ENCODE measurements at regions of chr3 and their contacts with region 1.

Region 1: DNA sequence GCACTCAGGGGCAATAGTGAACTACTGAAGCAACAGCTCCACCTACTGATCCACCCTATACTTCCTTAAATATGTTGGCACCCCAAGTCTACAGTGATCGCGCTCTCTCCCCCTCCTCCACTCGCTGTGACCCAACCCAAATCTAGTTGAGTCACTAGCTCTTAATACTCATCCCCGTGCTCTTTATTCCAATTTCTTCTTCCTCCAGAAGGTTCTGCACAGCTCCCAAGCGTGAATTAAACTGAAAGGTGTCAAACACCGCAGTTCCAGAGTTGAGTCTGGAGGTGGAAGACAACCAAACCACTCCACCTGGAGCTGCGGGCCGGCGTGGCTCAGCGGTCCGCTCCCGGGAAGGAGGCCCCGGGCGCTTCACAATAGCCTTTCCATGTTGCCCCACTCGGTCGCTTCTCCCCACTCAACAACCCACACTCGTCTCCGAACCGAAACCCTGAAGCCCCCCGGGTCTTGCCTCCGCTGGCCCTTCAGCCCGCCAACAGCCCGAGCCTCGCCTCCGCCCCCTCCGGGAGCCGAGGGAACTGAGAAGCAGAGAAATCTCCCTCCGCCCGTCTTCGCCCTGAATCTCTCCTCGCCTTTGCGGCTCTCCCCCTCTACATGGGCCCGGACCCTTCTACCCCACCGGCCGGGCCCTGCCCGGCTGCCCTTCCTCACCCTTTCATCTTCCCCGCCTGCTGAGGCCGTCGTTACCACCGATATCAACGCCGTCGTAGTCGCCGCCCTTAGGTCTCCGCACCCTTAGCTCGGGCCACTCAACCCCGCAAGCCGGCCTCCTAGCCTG is 578 bp downstream of the NAA50 start:
- DNase-seq: peak; percentile 51 to 95 (median 78)
- ATAC-seq: peak; percentile 71
- H3K4me3 ChIP-seq: peak overlapping the region; percentile 83 to 86
- H3K4me3 Mint-ChIP-seq: peak overlapping the region; percentile 95
- H3K27ac ChIP-seq: peak overlapping the region; percentile 97 to 99
- H3K27ac Mint-ChIP-seq: peak overlapping the region; percentile 100
- H3K4me1 ChIP-seq: peaks cover 46% of the 10 kb centered on the region
- H3K4me1 Mint-ChIP-seq: peaks cover 72% of the 10 kb centered on the region
- H3K27me3 ChIP-seq: no peaks in the 10 kb centered on the region
- H3K27me3 Mint-ChIP-seq: no peaks in the 10 kb centered on the region
- CTCF ChIP-seq: peak; percentile 66

Region 2: DNA sequence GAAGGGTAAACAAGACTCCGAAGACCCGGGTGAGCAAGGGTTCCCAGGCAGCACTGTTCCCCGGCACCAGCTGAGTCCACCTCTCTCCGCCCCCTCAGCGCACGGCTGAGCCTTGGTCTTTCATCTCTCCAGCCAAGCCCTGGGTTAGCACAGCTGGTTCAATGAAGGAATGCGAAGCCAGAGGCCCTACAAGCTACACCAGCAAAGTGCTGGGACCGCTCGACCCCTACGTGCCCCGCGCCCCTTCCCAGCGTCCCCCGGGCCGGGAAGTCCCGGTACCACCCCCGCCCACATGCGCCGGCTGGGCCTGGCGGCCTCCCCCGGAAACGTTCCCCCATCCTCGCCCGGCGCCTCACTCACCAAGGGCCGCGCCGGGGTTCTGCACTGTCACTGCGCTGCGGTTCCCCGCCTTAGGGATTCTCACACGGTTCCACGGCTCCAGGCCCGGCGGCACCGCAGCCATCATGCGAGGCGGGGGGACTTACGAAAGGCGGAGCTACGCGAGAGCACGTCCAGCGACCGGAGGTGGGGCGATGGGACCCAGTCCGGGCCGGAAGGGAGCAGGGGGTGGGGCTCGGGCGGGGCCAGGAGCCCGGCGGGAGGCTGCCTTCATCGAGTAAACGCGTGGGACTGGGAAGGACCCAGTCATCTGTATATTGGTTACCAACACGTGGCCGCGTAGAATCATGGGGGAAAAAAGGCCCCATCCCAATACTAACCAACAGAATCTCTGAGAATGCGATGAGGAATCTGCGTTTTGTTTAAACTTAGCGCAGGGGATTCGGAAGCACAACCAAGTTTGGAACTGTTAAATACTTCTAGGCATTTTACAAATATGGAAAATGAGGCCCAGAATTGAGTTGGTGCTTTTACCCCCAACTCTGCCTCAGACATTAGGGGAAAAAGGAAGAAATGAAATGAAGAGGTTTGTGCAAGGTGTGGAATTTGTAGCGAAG is 726.0 kb before region 1 on chr3:
- CTCF ChIA-PET with region 1: no interaction called
- POLR2A ChIA-PET with region 1: no interaction called
- intact Hi-C with region 1: loop called in 1 of 2 experiments (anchors 10 kb)
- DNase-seq: peak; percentile 54 to 95 (median 82)
- ATAC-seq: peak; percentile 87
- H3K4me3 ChIP-seq: peak overlapping the region; percentile 57 to 87
- H3K4me3 Mint-ChIP-seq: peak overlapping the region; percentile 95
- H3K27ac ChIP-seq: peak overlapping the region; percentile 67 to 95
- H3K27ac Mint-ChIP-seq: peak overlapping the region; percentile 94
- H3K4me1 ChIP-seq: peaks cover 29% of the 10 kb centered on the region
- H3K4me1 Mint-ChIP-seq: peaks cover 64% of the 10 kb centered on the region
- H3K27me3 ChIP-seq: no peaks in the 10 kb centered on the region
- H3K27me3 Mint-ChIP-seq: no peaks in the 10 kb centered on the region
- CTCF ChIP-seq: no peak

Region 3: DNA sequence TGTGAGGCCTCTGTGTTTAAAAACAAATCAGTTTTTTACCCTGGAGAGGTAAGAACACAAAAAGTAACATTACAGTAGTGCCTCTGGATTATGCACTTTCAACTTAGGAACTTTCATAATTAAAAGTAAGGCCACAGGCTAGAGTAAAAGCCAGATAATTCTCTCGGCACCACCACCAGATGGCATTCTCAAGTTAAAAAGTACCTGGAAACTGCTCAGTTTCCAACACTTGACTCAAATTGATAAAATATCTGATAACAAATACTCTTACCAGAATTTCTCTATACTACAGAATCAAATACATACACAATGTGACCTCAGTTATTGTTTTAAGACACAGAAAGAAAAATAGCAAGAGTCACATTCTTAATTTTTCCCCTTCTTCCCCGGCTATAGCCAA is 250.4 kb before region 1 on chr3:
- CTCF ChIA-PET with region 1: interaction called, 14 read pairs
- POLR2A ChIA-PET with region 1: no interaction called
- intact Hi-C with region 1: loop called (anchors 1 to 2 kb)
- DNase-seq: peak in 6 of 9 experiments; percentile 38 to 67 (median 54)
- ATAC-seq: no peak
- H3K4me3 ChIP-seq: no peak overlapping the region
- H3K4me3 Mint-ChIP-seq: no peak overlapping the region
- H3K27ac ChIP-seq: no peak overlapping the region
- H3K27ac Mint-ChIP-seq: no peak overlapping the region
- H3K4me1 ChIP-seq: no peaks in the 10 kb centered on the region
- H3K4me1 Mint-ChIP-seq: no peaks in the 10 kb centered on the region
- H3K27me3 ChIP-seq: no peaks in the 10 kb centered on the region
- H3K27me3 Mint-ChIP-seq: no peaks in the 10 kb centered on the region
- CTCF ChIP-seq: peak; percentile 54

Region 4: GRCh38 chr3:113575206-113575605 is 170.3 kb before region 1 on chr3:
- CTCF ChIA-PET with region 1: interaction called, 7 read pairs
- POLR2A ChIA-PET with region 1: interaction called, 4 read pairs
- intact Hi-C with region 1: loop called in 1 of 2 experiments (anchors 2 kb)
- DNase-seq: no peak
- ATAC-seq: no peak
- H3K4me3 ChIP-seq: no peak overlapping the region
- H3K4me3 Mint-ChIP-seq: no peak overlapping the region
- H3K27ac ChIP-seq: no peak overlapping the region
- H3K27ac Mint-ChIP-seq: peak overlapping the region; percentile 61
- H3K4me1 ChIP-seq: no peaks in the 10 kb centered on the region
- H3K4me1 Mint-ChIP-seq: peaks cover 2% of the 10 kb centered on the region
- H3K27me3 ChIP-seq: no peaks in the 10 kb centered on the region
- H3K27me3 Mint-ChIP-seq: no peaks in the 10 kb centered on the region
- CTCF ChIP-seq: no peak

Region 5: DNA sequence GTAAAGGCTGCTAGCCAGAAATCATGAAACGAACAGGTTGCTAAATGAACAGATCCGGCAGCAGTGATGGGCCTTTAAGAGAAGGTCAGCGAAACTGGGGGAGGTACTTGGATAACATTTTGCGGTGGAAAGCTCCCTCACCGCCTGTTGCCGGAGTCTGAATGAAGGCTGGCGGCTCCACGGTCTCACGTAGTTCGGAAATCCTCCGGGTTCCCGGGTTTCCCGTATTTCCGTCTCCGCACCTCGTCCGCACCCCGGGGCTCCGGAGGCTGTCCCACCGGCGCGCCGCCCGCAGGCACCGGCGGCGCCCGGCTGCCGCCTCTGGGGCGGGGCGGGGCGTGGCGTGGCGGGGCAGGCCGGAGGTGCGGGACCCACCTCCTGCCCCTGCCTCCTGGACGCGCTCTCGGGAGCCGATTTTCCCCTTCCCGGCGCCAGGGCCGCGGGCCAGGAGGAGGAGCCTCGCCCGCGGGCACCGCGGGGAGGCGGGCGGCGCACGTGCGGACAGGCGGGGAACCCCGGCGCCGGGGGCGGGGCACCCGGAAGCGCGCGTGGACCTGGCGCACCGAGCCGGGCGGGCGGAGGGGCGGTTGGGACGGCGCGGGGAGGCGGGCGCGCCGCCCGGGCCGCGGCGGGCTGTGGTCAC is 202.0 kb after region 1 on chr3 and contains the start of gene ZDHHC23:
- CTCF ChIA-PET with region 1: no interaction called
- POLR2A ChIA-PET with region 1: no interaction called
- intact Hi-C with region 1: loop called in 1 of 2 experiments (anchors 5 kb)
- DNase-seq: peak; percentile 21 to 88 (median 63)
- ATAC-seq: peak; percentile 87
- H3K4me3 ChIP-seq: peak within 1 kb of the TSS; percentile 74 to 85
- H3K4me3 Mint-ChIP-seq: peak within 1 kb of the TSS; percentile 86
- H3K27ac ChIP-seq: no peak within 1 kb of the TSS
- H3K27ac Mint-ChIP-seq: peak within 1 kb of the TSS; percentile 84
- H3K4me1 ChIP-seq: peaks cover 8% of the 10 kb centered on the region
- H3K4me1 Mint-ChIP-seq: peaks cover 10% of the 10 kb centered on the region
- H3K27me3 ChIP-seq: no peaks in the 10 kb centered on the region
- H3K27me3 Mint-ChIP-seq: peaks cover 21% of the 10 kb centered on the region
- CTCF ChIP-seq: no peak
- total RNA-seq, gene ZDHHC23: 2.1 to 4.7 TPM

Region 6: DNA sequence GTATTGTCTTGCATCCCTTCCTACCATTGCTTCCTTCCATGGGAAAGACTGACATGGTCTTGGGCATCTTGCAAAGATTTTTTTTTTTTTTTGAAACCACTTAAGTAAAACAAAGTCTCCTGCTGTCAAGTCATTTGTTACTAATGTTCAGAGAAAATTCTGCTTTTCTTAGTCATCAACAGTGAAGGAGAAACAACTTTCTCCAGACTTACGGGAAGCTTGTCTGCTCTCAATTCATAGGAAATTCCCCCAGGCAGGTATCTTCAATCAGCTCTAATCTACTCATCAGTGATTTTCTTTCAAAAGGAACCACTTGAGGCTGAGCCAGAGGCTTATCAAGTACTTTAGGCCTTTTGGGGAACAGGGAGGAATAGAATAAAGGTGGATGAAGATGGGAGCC is 449.3 kb after region 1 on chr3:
- CTCF ChIA-PET with region 1: no interaction called
- POLR2A ChIA-PET with region 1: no interaction called
- intact Hi-C with region 1: no loop called
- DNase-seq: no peak
- ATAC-seq: no peak
- H3K4me3 ChIP-seq: no peak overlapping the region
- H3K4me3 Mint-ChIP-seq: no peak overlapping the region
- H3K27ac ChIP-seq: no peak overlapping the region
- H3K27ac Mint-ChIP-seq: no peak overlapping the region
- H3K4me1 ChIP-seq: no peaks in the 10 kb centered on the region
- H3K4me1 Mint-ChIP-seq: no peaks in the 10 kb centered on the region
- H3K27me3 ChIP-seq: no peaks in the 10 kb centered on the region
- H3K27me3 Mint-ChIP-seq: no peaks in the 10 kb centered on the region
- CTCF ChIP-seq: no peak

Region 7: DNA sequence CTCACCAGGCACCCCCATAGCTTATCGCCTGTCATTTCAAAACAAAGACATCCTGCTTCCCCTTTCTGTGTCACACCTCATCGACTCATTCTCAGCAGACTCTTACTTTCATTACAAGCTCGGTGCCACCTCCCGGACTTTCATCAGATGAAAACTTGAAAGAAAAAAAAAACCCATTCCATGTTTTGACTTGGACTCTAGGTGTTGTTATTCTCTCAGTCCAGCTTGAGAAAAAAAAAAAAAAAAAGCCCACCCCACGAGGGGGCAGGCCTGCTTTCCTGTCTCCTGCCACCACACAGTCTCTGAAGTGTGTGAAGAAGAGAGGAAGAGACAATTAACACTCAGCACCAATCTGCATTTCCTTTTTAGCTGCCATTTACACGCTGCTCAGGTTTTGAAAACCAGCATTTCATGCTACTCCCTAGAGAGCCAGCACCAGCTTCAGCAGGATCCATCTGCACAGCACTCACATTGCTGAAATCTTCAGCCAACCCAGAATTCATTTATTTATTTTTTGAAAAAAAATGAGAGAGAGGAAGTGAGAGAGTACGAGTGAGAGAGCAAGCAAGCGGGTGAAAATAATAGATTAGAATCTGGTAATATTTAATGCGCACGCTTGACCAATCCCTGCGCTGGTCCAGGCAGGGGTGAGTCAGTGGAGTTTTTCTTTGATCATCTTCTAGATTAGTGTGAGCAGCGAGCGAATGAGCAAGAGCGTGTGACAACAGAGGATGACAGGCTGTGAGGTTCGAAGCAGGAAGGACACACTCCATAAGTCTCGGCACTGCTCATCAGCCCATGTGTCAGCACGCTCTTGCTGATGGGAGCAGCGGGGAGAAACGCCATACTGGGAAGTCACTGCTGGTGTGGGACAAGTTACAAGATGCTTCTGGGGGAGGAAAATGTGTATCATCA is 468.4 kb after region 1 on chr3:
- CTCF ChIA-PET with region 1: no interaction called
- POLR2A ChIA-PET with region 1: interaction called, 5 read pairs
- intact Hi-C with region 1: loop called (anchors 2 to 5 kb)
- DNase-seq: peak; percentile 35 to 92 (median 74)
- ATAC-seq: peak; percentile 45
- H3K4me3 ChIP-seq: peak overlapping the region; percentile 55
- H3K4me3 Mint-ChIP-seq: no peak overlapping the region
- H3K27ac ChIP-seq: peak overlapping the region; percentile 91 to 96
- H3K27ac Mint-ChIP-seq: no peak overlapping the region
- H3K4me1 ChIP-seq: peaks cover 60% of the 10 kb centered on the region
- H3K4me1 Mint-ChIP-seq: peaks cover 3% of the 10 kb centered on the region
- H3K27me3 ChIP-seq: no peaks in the 10 kb centered on the region
- H3K27me3 Mint-ChIP-seq: no peaks in the 10 kb centered on the region
- CTCF ChIP-seq: peak; percentile 38

Region 8: DNA sequence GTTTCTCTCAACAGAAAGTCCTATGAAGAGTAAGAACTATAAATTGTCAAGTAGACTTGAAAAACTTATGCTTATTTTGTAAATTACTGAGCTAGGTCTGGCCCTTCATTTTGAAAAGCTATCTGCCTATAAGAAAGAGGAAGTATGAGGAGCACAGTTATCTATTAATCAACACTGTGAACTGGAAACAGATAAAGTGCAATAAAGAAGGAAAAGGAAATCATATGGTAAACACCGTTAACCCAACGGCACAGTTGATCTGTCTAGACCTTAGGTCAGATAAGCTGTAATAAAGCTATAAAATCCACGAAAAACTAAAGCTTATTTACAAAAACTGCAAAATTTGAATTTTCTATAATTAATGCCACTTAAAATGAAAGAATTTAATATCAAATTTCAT is 1159.2 kb after region 1 on chr3:
- CTCF ChIA-PET with region 1: no interaction called
- POLR2A ChIA-PET with region 1: no interaction called
- intact Hi-C with region 1: no loop called
- DNase-seq: no peak
- ATAC-seq: no peak
- H3K4me3 ChIP-seq: no peak overlapping the region
- H3K4me3 Mint-ChIP-seq: no peak overlapping the region
- H3K27ac ChIP-seq: no peak overlapping the region
- H3K27ac Mint-ChIP-seq: no peak overlapping the region
- H3K4me1 ChIP-seq: no peaks in the 10 kb centered on the region
- H3K4me1 Mint-ChIP-seq: peaks cover 26% of the 10 kb centered on the region
- H3K27me3 ChIP-seq: no peaks in the 10 kb centered on the region
- H3K27me3 Mint-ChIP-seq: no peaks in the 10 kb centered on the region
- CTCF ChIP-seq: no peak